ENCODE measurements at regions of chr18 and their contacts with region 1.

Region 1: DNA sequence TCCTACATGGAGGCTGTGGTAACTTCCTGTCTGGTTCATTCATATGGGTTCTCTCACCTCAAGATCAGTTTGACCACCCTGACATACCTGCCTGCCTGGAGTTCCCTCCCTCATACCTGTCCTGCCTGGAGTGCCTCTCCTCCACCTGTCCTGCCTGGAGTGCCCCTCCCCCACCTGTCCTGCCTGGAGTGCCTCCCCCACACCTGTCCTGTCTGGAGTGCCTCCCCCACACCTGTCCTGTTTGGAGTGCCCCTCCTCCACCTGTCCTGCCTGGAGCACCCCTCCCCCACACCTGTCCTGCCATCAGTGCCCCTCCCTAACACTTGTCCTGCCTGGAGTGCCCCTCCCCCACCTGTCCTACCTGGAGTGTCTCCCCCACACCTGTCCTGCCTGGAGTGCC is 461.9 kb downstream of the PTPRM start:
- DNase-seq: peak; percentile 34 to 66
- H3K4me3 ChIP-seq: no peak overlapping the region
- H3K4me3 Mint-ChIP-seq: no peak overlapping the region
- H3K27ac Mint-ChIP-seq: no peak overlapping the region
- H3K4me1 ChIP-seq: peaks cover 14% of the 10 kb centered on the region; the same call in 1 of the 2 replicates
- H3K4me1 Mint-ChIP-seq: peaks cover 12% of the 10 kb centered on the region
- H3K27me3 ChIP-seq: no peaks in the 10 kb centered on the region
- H3K27me3 Mint-ChIP-seq: no peaks in the 10 kb centered on the region
- CTCF ChIP-seq: no peak

Region 2: DNA sequence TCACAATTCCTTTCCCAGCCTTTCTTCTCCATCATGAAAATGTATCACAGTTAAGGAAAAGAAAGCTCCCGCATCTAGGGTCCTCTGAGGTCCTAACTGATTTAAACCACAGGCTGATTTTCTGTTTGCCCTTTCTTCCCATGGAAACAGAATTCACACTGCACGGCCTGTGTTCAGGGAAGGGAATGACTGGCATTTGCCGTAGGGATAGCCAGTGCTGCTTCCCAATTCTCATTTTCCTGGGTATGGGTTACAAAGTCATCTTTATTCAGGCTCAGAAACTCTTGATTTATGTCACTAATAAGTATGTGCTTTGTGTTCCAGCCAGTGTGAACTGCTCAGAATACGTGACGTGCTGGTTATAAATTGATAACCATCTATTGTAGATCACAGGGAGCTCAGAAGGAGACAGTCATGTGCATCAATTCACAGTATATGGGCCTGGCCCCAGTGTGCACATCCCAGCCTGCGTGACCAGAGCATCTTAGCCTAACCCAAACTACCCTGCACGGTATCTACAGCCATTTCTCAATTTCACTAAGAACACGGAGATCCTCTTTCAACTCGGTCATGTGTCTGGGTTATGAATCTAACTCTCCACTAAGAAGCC is 634.9 kb before region 1 on chr18:
- CTCF ChIA-PET with region 1: no interaction called
- POLR2A ChIA-PET with region 1: no interaction called
- intact Hi-C with region 1: no loop called
- DNase-seq: no peak
- H3K4me3 ChIP-seq: no peak overlapping the region
- H3K4me3 Mint-ChIP-seq: no peak overlapping the region
- H3K27ac Mint-ChIP-seq: no peak overlapping the region
- H3K4me1 ChIP-seq: 0 out of 2 replicates have a peak, but pooled peaks cover 5% of the 10 kb centered on the region
- H3K4me1 Mint-ChIP-seq: no peaks in the 10 kb centered on the region
- H3K27me3 ChIP-seq: no peaks in the 10 kb centered on the region
- H3K27me3 Mint-ChIP-seq: peaks cover 5% of the 10 kb centered on the region
- CTCF ChIP-seq: no peak

Region 3: GRCh38 chr18:8073167-8073566 is 44.1 kb after region 1 on chr18:
- CTCF ChIA-PET with region 1: no interaction called
- POLR2A ChIA-PET with region 1: no interaction called
- intact Hi-C with region 1: loop called (anchors 10 kb)
- DNase-seq: no peak
- H3K4me3 ChIP-seq: no peak overlapping the region
- H3K4me3 Mint-ChIP-seq: no peak overlapping the region
- H3K27ac Mint-ChIP-seq: no peak overlapping the region
- H3K4me1 ChIP-seq: no peaks in the 10 kb centered on the region
- H3K4me1 Mint-ChIP-seq: no peaks in the 10 kb centered on the region
- H3K27me3 ChIP-seq: no peaks in the 10 kb centered on the region
- H3K27me3 Mint-ChIP-seq: no peaks in the 10 kb centered on the region
- CTCF ChIP-seq: no peak

Region 4: GRCh38 chr18:8116346-8117005 is 87.4 kb after region 1 on chr18:
- CTCF ChIA-PET with region 1: no interaction called
- POLR2A ChIA-PET with region 1: no interaction called
- intact Hi-C with region 1: no loop called
- DNase-seq: no peak
- H3K4me3 ChIP-seq: no peak overlapping the region
- H3K4me3 Mint-ChIP-seq: no peak overlapping the region
- H3K27ac Mint-ChIP-seq: no peak overlapping the region
- H3K4me1 ChIP-seq: peaks cover 8% of the 10 kb centered on the region; the same call in 1 of the 2 replicates
- H3K4me1 Mint-ChIP-seq: no peaks in the 10 kb centered on the region
- H3K27me3 ChIP-seq: no peaks in the 10 kb centered on the region
- H3K27me3 Mint-ChIP-seq: no peaks in the 10 kb centered on the region
- CTCF ChIP-seq: no peak

Region 5: DNA sequence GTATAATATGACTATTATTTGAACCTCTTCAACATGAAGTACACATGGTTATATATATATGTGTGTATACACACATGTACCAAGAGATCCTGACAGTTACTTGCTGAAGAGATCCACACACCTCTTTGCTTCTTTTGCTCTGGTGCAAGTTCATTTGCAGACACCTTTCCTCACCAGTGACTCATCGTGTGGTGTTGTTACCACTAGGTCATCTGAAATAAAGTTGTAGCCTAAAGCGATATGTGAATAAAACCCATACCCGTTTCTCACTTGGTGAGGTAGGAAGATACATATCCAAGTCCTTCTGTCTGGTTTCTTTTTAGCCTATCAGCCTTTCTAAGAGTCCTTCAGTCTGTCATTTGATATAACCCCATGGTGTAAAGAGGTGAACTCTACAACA is 200.7 kb after region 1 on chr18:
- CTCF ChIA-PET with region 1: no interaction called
- POLR2A ChIA-PET with region 1: no interaction called
- intact Hi-C with region 1: no loop called
- DNase-seq: no peak
- H3K4me3 ChIP-seq: no peak overlapping the region
- H3K4me3 Mint-ChIP-seq: no peak overlapping the region
- H3K27ac Mint-ChIP-seq: no peak overlapping the region
- H3K4me1 ChIP-seq: no peaks in the 10 kb centered on the region
- H3K4me1 Mint-ChIP-seq: peaks cover 10% of the 10 kb centered on the region
- H3K27me3 ChIP-seq: no peaks in the 10 kb centered on the region
- H3K27me3 Mint-ChIP-seq: no peaks in the 10 kb centered on the region
- CTCF ChIP-seq: no peak